Posterior cingulate gyrus (tissue), 11 donors: ENCODE measurements at regions of chr12 and their contacts with region 1.

Region 1: DNA sequence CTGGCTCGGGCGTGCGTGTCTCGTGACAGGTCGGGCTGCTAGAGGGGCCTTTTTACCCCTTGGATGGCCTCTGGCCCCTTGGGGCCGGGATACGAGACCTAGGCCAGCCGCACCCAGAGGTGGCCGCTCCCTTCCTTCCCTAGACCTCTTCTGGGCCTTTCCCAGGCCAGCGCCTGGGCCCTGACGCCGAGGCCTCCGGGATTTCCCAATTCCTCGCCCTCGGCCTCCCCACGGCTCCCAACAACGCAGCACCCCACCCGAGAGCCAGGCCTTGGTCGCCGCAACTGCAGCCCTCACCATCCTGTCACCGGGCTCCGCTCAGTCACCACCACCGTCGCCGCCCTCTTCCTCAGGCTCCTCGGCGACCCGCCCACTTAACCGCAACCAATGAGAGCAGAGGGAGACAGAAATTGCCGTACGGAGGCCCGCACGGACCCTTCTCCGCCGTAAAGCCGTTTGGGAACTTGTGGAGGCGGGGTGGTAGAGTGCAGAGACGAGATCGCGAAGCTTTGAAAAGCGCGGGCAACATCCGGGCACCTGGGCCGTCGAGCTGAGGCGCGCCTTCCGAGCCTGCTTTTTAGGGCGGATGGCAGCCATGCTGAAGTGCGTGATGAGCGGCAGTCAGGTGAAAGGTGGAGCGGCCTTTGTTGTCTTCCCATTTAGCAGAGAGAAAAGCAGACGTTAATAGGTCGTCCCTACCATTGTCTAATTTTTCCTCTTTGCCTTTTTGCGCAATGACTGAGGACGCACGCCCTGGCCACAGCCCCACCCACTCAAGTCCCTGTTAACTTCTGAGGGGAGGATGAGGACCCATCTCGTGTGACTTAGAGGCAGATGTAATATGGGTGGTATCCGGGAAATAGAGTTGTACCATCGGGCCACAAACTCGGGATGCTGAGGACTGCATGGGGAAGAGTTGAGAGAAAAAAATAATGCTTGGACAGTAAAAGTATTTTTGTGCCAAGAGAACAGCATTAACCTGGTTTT is at the starts of genes RAD9B and VPS29:
- DNase-seq: peak; percentile 95 to 99 (median 97)

Region 2: DNA sequence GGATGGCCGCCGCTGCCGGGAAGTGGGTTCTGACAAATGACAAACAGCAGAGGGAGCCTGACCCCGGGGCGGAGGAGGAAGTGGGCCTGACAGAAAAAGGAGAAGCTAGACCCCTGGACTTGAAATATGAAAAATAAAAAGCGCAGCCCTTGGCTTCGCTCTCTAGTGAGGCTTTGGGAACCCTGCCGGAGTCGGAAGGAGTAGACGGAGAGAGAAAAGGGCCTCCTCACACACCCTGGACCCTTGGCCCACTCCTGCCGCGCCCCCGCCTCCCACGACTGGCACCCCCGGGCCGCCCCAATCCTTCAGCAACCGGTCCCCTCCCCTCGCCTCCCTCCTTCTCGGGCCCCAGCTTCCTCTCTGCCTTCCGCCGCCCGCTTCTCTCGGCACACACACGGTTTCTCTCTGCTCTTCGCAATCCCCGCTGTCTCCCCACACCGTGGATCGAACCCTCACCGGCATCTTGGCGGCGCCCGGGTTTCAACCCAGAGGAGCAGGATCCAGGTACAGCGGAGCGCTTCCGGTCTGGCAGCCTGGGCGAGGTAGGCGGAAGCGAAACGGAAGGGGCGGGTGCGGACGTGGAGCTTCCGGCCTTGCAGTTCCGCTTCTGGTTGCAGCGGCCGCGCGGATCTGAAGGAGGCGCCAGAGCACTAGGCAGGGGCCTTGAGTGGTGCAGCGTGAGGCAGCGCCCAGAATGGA is 52.1 kb before region 1 on chr12 and contains the start of gene ARPC3:
- intact Hi-C with region 1: loop called (anchors 5 kb)
- DNase-seq: peak; percentile 89 to 99 (median 94)

Region 3: DNA sequence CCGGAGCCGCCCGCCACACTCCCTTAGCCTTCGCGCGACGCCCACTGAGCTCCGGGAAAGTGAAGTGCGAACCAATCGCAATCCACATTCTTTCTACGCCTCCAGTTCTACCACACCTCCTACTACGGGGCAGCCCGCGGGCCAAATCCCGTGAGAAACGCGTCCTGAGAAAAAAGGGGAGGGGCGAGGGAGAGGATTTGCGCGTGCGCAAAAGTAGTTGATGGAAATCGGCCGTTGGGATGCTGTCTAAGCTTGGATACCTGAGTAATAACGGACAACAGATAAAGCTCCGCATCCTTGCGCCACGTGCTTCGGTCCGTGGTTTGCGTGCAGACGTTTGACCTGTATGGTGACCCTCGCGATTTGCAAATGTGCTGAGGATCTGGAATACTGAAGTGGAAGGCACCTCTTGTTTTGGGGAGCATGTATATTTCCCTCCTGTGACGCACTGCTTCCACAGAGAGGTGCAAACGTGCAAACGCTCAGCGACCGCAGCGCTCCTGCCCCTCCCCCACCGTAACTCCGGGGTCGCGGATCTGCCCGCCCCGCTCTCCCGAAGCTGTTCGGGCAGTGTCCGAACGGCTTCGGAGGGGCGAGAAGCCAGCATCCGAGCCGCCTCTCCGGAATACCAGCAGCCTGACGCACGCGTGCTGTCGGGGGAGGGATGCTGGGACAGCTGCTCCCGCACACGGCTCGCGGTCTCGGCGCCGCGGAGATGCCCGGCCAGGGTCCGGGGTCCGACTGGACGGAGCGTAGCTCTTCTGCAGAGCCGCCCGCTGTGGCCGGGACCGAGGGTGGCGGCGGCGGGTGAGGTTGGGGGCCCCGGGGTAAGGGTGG is 33.6 kb before region 1 on chr12 and contains the starts of genes FAM216A and GPN3:
- intact Hi-C with region 1: loop called (anchors 1 kb)
- DNase-seq: peak; percentile 92 to 99 (median 95)

Region 4: GRCh38 chr12:110583137-110584059 is 81.4 kb after region 1 on chr12 and contains the start of gene PPTC7:
- intact Hi-C with region 1: loop called (anchors 5 kb)
- DNase-seq: peak; percentile 96 to 99 (median 98)